Activated CD4-positive, alpha-beta T cell treated with anti-CD3 and anti-CD28 coated beads for 36 hours (primary cell): ENCODE measurements at regions of chr16 and their contacts with region 1.

Region 1: DNA sequence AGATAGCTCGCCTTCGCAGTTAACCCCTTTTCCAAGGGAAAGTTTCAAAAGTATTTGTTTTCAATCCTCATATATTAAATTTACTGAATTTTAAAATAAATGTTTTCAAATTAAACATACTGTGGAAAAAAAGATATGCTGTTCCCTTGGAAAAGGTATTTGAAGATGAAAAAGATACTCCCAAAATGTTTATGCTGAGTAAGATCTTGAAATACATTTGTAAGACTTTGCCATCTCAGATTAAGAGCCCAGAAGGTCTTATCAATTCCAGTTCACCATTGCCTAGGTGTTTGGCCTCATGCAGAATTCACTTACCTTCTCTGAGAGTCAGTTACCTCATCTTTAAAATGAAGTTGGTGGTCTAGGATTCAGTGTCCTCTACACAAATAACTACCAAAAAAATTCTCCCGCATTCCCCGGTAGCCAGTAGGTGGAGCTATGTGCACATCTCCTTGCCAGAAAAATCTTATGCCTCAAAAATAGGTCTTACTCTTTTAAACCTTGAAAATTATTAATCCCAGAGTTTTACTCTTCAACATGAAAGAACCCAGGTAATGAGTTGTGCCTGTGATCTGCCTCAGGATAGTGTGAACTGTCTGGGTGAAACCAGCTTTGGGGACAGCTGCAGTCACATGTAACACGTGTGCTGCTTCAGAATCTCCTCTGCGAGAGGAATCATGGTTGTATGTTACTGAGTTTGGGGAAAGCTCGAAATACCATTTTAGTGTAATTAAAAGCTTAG is 178.3 kb downstream of the MRTFB start:
- DNase-seq: peak; percentile 65
- ATAC-seq: no peak
- H3K4me3 Mint-ChIP-seq: no peak overlapping the region
- H3K27ac Mint-ChIP-seq: peak overlapping the region; percentile 26
- H3K4me1 Mint-ChIP-seq: peaks cover 4% of the 10 kb centered on the region
- H3K27me3 Mint-ChIP-seq: no peaks in the 10 kb centered on the region

Region 2: DNA sequence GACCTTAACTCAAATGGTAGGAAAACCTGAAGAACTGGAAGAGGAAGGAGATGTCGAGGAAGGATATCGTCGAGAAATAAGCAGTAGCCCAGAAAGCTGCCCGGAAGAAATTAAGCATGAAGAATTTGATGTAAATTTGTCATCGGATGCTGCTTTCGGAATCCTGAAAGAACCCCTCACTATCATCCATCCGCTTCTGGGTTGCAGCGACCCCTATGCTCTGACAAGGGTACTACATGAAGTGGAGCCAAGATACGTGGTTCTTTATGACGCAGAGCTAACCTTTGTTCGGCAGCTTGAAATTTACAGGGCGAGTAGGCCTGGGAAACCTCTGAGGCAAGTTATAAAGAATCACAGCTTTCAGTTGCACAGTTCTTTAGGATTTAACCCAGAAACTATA is 314.1 kb before region 1 on chr16:
- CTCF ChIA-PET with region 1: interaction called, 3 read pairs
- POLR2A ChIA-PET with region 1: no interaction called
- intact Hi-C with region 1: loop called in 1 of 2 experiments (anchors 5 kb)
- DNase-seq: peak; percentile 55
- ATAC-seq: no peak
- H3K4me3 Mint-ChIP-seq: no peak overlapping the region
- H3K27ac Mint-ChIP-seq: no peak overlapping the region
- H3K4me1 Mint-ChIP-seq: peaks cover 19% of the 10 kb centered on the region
- H3K27me3 Mint-ChIP-seq: no peaks in the 10 kb centered on the region

Region 3: GRCh38 chr16:14232106-14232864 is 17.2 kb before region 1 on chr16:
- CTCF ChIA-PET with region 1: interaction called, 3 read pairs
- POLR2A ChIA-PET with region 1: no interaction called
- intact Hi-C with region 1: loop called in 1 of 2 experiments (anchors 2 kb)
- DNase-seq: no peak
- ATAC-seq: no peak
- H3K4me3 Mint-ChIP-seq: no peak overlapping the region
- H3K27ac Mint-ChIP-seq: no peak overlapping the region
- H3K4me1 Mint-ChIP-seq: no peaks in the 10 kb centered on the region
- H3K27me3 Mint-ChIP-seq: no peaks in the 10 kb centered on the region

Region 4: GRCh38 chr16:14263011-14263410 is 13.5 kb after region 1 on chr16:
- CTCF ChIA-PET with region 1: interaction called, 11 read pairs
- POLR2A ChIA-PET with region 1: no interaction called
- intact Hi-C with region 1: no loop called
- DNase-seq: no peak
- ATAC-seq: no peak
- H3K4me3 Mint-ChIP-seq: no peak overlapping the region
- H3K27ac Mint-ChIP-seq: no peak overlapping the region
- H3K4me1 Mint-ChIP-seq: no peaks in the 10 kb centered on the region
- H3K27me3 Mint-ChIP-seq: no peaks in the 10 kb centered on the region

Region 5: DNA sequence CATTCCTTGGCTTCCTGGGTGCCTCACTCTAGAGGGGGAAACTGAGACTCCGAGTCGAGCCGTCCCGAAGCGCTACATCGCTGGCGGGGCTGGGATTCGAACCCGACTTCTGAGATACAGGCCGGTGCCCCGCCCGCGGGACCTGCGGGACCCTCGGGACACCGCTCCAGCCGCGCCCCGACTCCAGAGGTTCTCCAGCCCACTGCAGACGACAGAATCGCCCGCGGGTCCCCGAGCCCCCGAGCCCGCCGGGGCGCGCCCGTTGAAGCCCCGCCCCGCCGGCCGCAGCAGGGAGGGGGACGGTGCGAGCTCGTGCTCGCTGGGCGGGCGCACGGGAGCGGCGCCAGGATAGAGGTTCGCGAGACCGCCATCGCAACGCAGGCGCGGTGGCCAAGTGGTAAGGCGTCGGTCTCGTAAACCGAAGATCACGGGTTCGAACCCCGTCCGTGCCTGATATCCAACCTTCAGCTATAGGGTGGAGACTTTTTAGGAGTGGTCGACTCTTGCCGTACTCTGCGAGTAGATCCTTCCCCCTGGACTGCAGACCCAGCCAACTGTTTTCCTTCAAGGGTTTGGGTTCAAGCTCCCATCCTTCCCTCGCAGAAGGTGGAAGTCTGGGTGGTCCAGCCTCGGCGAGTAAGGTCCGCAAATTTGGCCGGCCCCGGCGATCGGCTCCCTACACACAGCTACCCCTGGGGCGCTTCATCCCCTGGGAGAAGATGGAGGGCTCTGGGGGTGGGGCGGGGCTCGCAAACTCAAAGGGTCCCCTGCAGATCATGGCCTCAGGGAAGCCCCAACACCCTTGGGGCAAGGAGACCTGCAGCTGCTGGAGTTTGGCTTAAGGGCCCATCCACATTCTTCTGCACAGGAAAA is 36.3 kb after region 1 on chr16:
- CTCF ChIA-PET with region 1: interaction called, 5 read pairs
- POLR2A ChIA-PET with region 1: no interaction called
- intact Hi-C with region 1: loop called in 1 of 2 experiments (anchors 1 kb)
- DNase-seq: peak; percentile 95
- ATAC-seq: peak; percentile 78
- H3K4me3 Mint-ChIP-seq: peak overlapping the region; percentile 80
- H3K27ac Mint-ChIP-seq: peak overlapping the region; percentile 84
- H3K4me1 Mint-ChIP-seq: peaks cover 13% of the 10 kb centered on the region
- H3K27me3 Mint-ChIP-seq: no peaks in the 10 kb centered on the region

Region 6: GRCh38 chr16:14529010-14529669 is 279.7 kb after region 1 on chr16:
- CTCF ChIA-PET with region 1: interaction called, 11 read pairs
- POLR2A ChIA-PET with region 1: no interaction called
- intact Hi-C with region 1: loop called (anchors 1 kb)
- DNase-seq: peak; percentile 74
- ATAC-seq: peak; percentile 58
- H3K4me3 Mint-ChIP-seq: no peak overlapping the region
- H3K27ac Mint-ChIP-seq: no peak overlapping the region
- H3K4me1 Mint-ChIP-seq: no peaks in the 10 kb centered on the region
- H3K27me3 Mint-ChIP-seq: no peaks in the 10 kb centered on the region

Region 7: GRCh38 chr16:14600164-14600563 is 350.7 kb after region 1 on chr16:
- CTCF ChIA-PET with region 1: interaction called, 3 read pairs
- POLR2A ChIA-PET with region 1: no interaction called
- intact Hi-C with region 1: loop called in 1 of 2 experiments (anchors 5 kb)
- DNase-seq: no peak
- ATAC-seq: no peak
- H3K4me3 Mint-ChIP-seq: no peak overlapping the region
- H3K27ac Mint-ChIP-seq: no peak overlapping the region
- H3K4me1 Mint-ChIP-seq: no peaks in the 10 kb centered on the region
- H3K27me3 Mint-ChIP-seq: no peaks in the 10 kb centered on the region